ENCODE measurements at regions of chr14 and their contacts with region 1.

Region 1: DNA sequence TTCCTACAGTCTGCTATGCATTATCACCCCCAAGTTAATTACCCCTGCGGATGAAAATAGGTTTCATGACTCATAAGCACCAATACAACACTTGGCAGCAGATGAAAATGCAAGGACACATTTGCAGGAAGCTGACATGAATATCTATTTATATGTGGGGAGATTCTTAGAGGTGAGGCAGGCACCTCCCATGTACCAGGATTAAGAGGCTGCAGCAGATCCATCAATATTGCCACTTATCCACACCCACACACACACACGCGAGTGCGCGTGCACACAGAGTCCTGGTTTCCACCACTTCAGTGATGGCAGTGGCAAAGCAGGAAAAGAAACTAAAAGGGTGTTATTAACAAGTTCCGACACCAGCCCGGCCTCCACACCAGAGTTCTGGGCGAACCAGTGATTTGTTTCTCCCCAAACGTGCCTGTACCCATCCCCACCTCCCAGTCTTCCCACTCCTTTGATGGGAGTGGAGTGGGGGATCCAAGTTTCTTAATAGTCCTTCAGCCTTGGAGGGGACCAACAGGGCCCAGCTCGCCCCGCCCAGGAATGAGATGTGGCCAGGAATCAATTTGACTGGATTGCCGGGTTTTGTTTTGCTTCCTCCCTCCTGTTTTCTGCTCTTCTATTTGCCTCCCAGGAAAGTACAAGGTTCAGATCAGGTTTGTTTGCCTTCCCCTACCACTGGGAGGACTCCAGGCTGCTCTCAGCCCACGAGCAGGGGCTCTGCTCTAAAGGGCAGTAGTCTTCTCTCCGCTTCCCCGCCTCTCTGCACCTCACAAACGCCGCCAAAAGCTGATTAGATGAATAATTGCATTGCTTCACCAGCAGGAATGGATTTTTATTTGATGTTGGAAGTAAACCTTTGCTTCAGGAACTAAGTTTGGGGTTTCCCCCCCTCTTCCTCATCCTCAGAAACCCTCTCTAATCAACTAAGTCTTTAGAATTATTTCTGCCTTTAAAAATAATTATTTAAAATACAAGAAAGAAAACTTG is 5.2 kb downstream of the IRF2BPL start:
- DNase-seq: peak; percentile 38
- H3K4me3 Mint-ChIP-seq: peak overlapping the region; percentile 61
- H3K27ac Mint-ChIP-seq: peak overlapping the region; percentile 84
- H3K4me1 Mint-ChIP-seq: peaks cover 46% of the 10 kb centered on the region
- H3K27me3 Mint-ChIP-seq: no peaks in the 10 kb centered on the region

Region 2: DNA sequence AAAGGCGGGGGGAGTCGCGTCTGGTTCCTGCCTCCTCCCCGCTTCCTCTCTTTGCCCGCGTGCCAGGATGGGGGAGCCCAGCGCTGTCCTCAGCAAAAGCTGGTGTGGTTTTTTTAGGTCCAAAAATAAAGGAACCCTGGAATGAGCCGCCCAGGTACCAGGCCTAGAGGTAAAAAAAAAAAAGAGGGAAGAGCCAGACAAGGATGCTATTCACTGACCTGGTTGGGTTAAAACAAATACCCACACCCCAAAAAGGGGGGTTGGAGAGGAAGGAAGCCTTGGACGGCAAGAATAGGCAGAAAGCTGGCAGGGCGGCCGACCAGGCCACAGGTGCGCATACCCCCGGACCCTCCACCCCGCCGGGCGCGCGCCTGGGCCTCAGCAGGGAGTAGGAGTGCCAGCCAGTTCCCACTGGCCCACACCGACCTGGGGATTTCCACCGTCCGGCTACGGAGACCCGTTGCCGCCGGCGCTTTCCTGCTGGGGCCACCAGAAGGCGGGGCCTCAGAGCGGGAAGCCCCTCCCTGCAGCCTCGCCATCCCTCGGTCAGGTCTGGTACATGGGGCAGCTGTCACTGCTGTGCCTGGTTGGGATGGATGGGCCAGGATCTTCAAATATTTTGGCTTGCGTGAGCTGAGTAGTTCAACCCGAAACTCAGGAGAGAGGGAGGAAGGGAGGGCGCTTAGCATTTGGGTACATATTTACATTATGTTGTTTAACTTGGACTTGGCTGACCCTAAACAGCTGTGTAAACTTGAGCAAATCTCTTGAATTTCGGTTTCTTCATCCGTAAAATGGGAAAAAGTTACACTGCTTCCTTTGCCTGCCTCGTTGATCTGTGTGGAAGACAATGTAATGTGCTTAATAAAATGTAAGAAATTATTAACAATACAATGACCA is 10.6 kb after region 1 on chr14:
- CTCF ChIA-PET with region 1: interaction called, 28 read pairs
- POLR2A ChIA-PET with region 1: interaction called, 229 read pairs
- DNase-seq: peak; percentile 83
- H3K4me3 Mint-ChIP-seq: peak overlapping the region; percentile 85
- H3K27ac Mint-ChIP-seq: peak overlapping the region; percentile 94
- H3K4me1 Mint-ChIP-seq: peaks cover 79% of the 10 kb centered on the region
- H3K27me3 Mint-ChIP-seq: no peaks in the 10 kb centered on the region

Measured in activated CD4-positive, alpha-beta memory T cell treated with anti-CD3 and anti-CD28 coated beads, Interleukin-2, amount 10 ng/mL, durations not matched to agents 7 days and 5 days (primary cell).